ENCODE measurements at regions of chr5 and their contacts with region 1.

Region 1: GRCh38 chr5:14142827-14143548 is at the start of gene TRIO:
- DNase-seq: peak; percentile 88 to 96
- H3K4me3 ChIP-seq: peak within 1 kb of the TSS; percentile 73
- H3K4me1 ChIP-seq: no peaks in the 10 kb centered on the region
- H3K27me3 ChIP-seq: no peaks in the 10 kb centered on the region

Region 2: DNA sequence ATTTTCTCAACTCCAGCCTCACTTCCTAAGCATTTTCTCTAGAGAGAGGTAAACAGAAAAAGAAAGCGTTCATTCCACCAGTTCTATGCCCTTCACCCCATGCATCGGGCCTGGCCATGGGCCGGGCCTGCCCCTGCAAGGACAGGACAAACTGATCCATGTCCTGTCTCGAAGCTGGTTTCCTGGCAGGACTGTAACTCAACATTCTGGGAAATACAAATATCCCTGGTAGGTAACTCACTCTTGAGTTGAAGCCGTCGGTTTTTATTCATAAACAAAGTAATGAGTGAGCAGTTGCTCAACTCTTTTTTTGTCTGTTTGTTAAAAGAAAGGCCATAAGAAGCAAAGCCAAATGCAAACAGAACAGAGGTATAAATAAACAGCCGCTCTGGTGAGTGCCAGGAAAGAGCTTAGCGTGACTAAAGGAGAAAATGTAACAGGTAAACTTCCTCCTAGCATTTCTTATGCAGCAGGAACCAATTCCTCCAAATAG is 134.1 kb before region 1 on chr5:
- in situ Hi-C with region 1: no loop called
- DNase-seq: no peak
- H3K4me3 ChIP-seq: no peak overlapping the region
- H3K4me1 ChIP-seq: peaks cover 12% of the 10 kb centered on the region
- H3K27me3 ChIP-seq: no peaks in the 10 kb centered on the region; the same call in 1 of the 2 replicates

Region 3: GRCh38 chr5:14097998-14098471 is 45.0 kb before region 1 on chr5:
- in situ Hi-C with region 1: no loop called
- DNase-seq: no peak
- H3K4me3 ChIP-seq: no peak overlapping the region
- H3K4me1 ChIP-seq: no peaks in the 10 kb centered on the region
- H3K27me3 ChIP-seq: peaks cover 8% of the 10 kb centered on the region; the same call in 1 of the 2 replicates

Region 4: GRCh38 chr5:14264604-14265316 is 121.8 kb after region 1 on chr5:
- in situ Hi-C with region 1: loop called (anchors 25 kb)
- DNase-seq: peak; percentile 91 to 95
- H3K4me3 ChIP-seq: peak overlapping the region; percentile 19
- H3K4me1 ChIP-seq: peaks cover 23% of the 10 kb centered on the region
- H3K27me3 ChIP-seq: no peaks in the 10 kb centered on the region